ENCODE measurements at regions of chr1 and their contacts with region 1.

Region 1: DNA sequence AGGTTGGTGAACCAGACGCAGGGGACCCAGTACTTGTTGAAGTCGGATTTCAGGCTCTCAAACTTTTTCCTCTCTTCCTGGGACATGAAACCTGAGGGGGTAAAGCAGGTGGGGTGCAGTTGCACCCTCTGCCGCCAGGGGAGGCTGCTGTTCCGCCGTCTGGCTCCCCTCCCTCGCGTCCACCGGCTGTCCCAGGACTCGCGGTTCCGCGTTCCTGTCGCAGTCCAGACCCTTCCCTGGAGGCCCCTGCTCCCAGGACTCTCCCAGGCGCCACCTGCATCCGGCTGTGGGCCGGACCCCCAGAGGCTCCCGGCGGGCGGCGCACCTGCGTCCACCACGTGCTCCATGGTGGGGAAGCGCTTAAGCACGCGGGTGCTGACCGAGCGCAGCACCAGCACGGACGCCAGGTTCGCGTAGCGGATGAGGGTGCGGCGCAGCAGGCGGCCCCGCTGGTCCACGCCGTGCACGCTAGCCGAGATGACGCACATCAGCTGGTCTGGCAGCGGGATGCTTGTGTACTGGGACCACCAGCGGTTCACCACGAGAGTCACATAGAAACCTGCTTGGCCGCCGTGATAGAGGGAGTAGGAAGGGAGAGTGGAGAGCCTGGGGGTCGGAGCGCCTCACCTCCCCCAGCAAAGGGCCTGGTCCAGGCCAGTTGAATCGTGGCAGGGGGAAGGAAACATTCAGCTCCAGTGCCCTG is 1.7 kb downstream of the BEST4 start:
- DNase-seq: peak; percentile 78
- H3K4me3 ChIP-seq: peak overlapping the region; percentile 56
- H3K27ac ChIP-seq: no peak overlapping the region
- H3K4me1 ChIP-seq: peaks cover 35% of the 10 kb centered on the region
- CTCF ChIP-seq: peak; percentile 97

Region 2: DNA sequence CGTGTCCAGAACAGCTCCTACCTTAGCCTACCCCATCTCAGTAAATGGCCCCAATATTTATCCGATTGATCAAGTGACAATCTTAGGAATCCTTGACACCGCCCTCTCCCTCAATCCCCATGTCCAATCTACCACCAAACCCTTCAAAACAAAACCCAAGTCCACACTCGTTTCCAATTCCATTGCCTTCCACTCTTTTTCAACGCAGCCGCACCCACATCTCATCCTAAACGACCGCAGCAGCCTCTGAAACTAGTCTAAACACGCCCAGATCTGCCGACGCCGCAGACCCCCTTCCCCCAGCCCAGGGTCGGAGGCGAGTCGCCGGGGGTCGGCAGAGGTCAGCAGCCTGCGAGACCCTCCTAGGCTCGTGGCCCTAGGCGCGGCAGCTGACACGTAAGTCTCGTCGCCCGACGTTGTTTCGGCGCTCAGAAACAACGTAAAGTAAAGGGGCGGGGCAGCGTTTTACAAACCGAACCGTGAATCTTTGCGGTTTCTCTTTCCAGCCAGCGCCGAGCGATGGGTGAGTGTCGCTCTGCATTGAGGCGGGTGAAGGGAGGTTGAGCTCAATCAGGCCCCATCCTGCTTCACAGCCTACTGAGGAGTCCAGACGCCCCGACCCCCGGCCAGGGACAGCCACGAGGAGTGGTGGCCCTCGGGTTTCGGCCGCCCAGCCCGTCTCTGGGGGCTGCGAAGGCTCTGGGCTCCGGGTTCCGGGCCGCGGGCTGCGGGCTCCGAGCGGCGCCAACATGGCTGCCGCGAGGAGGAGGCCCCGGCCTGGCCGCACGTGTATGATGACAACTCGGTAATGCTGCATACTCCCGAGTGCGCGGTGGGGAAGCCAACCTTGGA is 11.0 kb before region 1 on chr1 and contains the start of gene RPS8:
- CTCF ChIA-PET with region 1: interaction called, 4 read pairs
- POLR2A ChIA-PET with region 1: interaction called, 14 read pairs
- intact Hi-C with region 1: no loop called
- DNase-seq: peak; percentile 95
- H3K4me3 ChIP-seq: peak within 1 kb of the TSS; percentile 99
- H3K27ac ChIP-seq: peak within 1 kb of the TSS; percentile 68
- H3K4me1 ChIP-seq: peaks cover 32% of the 10 kb centered on the region
- CTCF ChIP-seq: no peak
- total RNA-seq, gene RPS8: 4,149 and 4,355 TPM in 2 replicates

Region 3: DNA sequence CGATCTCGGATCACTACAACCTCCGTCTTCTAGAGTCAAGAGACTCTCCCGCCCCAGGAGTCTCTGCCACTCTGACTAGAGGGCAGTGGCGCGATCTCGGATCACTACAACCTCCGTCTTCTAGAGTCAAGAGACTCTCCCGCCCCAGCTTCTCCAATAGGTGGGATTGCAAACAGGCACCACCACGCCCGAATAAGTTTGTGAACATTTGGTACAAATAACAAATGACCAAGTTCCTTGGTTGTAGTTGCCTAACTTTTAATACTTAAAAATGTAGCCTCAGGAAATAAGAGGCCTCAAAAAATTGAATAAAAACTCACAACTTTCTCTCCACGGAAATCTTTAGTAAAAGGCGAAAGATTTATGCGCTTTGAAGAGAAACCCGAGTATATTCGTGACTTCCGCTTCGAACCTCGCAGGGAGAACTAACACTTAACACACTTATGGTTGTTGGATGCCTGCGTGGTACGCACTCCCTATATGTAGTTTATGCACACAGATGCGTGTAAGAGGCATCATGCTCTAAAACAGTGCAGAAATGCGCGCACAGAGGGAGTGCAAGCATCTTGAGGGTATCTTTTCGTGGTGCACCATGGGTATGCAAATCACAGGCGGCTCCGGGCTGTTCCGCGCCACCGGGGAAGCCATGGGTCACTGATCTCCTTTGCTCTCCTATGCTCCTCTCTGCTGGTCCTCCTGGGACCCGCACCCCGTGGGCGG is 33.5 kb after region 1 on chr1:
- CTCF ChIA-PET with region 1: no interaction called
- POLR2A ChIA-PET with region 1: interaction called, 4 read pairs
- intact Hi-C with region 1: loop called (anchors 1 kb)
- DNase-seq: peak; percentile 95
- H3K4me3 ChIP-seq: peak overlapping the region; percentile 67
- H3K27ac ChIP-seq: peak overlapping the region; percentile 93
- H3K4me1 ChIP-seq: peaks cover 36% of the 10 kb centered on the region
- CTCF ChIP-seq: no peak

Region 4: DNA sequence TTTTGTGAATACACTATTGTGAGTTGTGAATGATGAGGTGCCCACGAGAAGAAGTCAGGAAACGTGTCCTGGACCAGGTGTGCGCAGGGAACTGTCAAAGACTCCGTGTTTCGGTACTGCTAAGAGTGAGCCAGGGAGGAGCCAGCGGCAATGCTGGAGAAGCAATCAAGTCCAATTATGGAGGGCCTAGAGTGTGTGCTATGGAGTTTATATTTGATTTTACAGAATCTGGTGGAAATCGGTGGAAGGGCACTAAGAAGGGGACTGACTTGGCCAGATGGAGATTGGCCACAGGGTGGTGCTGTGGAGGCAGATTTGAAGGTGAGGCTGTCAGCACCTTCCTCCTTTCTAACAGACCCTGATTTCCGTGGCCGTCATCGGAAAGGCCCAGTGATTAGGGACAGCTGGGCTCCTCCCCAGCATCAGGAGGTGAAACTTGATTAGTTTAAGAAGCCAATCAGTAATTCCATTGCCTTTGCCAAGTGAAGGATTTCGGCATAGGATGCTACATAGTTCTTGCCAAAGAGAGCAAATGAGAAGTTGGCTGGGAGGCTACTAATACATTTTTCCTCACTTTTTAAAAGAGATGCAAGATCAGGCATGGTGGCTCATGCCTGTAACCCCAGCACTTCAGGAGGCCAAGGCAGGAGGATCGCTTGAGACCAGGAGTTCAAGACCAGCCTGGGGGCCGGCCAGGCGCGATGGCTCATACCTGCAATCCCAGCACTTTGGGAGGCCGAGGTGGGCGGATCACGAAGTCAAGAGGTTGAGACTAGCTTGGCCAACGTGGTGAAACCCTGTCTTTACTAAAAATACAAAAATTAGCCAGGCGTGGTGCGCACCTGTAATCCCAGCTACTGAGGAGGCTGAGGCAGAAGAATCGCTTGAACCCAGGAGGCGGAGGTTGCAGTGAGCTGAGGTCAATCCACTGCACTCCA is 49.7 kb after region 1 on chr1:
- CTCF ChIA-PET with region 1: interaction called, 19 read pairs
- POLR2A ChIA-PET with region 1: no interaction called
- intact Hi-C with region 1: no loop called
- DNase-seq: peak; percentile 77
- H3K4me3 ChIP-seq: no peak overlapping the region
- H3K27ac ChIP-seq: no peak overlapping the region
- H3K4me1 ChIP-seq: no peaks in the 10 kb centered on the region
- CTCF ChIP-seq: peak; percentile 94

Region 5: DNA sequence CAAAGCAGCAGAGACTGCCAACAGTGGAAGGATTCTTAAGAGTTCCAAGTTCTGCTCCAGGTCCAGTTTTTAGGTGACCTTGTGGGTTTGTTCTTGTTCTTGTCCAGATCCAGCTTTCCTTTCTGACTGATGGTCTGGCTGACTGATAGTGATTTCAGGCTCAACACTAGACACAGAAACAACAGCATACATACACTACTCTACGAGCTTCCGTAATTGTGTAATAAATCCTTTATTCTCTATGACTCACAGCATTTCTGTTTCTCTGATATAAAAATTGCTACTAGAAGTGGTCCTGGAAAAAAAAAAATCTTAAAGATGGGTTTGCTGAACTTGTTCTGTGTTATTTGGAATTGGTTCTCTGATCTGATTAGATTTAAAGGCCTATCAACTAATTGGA is 119.0 kb after region 1 on chr1:
- CTCF ChIA-PET with region 1: interaction called, 11 read pairs
- POLR2A ChIA-PET with region 1: no interaction called
- intact Hi-C with region 1: no loop called
- DNase-seq: no peak
- H3K4me3 ChIP-seq: no peak overlapping the region
- H3K27ac ChIP-seq: no peak overlapping the region
- H3K4me1 ChIP-seq: no peaks in the 10 kb centered on the region
- CTCF ChIP-seq: no peak

Measured in OCI-LY7 (cell line).